CD8-positive, alpha-beta T cell (primary cell): ENCODE measurements at regions of chr6 and their contacts with region 1.

Region 1: GRCh38 chr6:49531774-49532569 is 18.5 kb upstream of the C6orf141 start:
- DNase-seq: peak in 2 of 9 experiments; percentile 20 to 43
- ATAC-seq: peak; percentile 71
- H3K4me3 ChIP-seq: no peak overlapping the region
- H3K4me3 Mint-ChIP-seq: no peak overlapping the region
- H3K27ac ChIP-seq: no peak overlapping the region
- H3K27ac Mint-ChIP-seq: no peak overlapping the region
- H3K4me1 ChIP-seq: no peaks in the 10 kb centered on the region
- H3K4me1 Mint-ChIP-seq: peaks cover 4% of the 10 kb centered on the region
- H3K27me3 ChIP-seq: no peaks in the 10 kb centered on the region
- H3K27me3 Mint-ChIP-seq: peaks cover 14% of the 10 kb centered on the region
- CTCF ChIP-seq: peak; percentile 81

Region 2: DNA sequence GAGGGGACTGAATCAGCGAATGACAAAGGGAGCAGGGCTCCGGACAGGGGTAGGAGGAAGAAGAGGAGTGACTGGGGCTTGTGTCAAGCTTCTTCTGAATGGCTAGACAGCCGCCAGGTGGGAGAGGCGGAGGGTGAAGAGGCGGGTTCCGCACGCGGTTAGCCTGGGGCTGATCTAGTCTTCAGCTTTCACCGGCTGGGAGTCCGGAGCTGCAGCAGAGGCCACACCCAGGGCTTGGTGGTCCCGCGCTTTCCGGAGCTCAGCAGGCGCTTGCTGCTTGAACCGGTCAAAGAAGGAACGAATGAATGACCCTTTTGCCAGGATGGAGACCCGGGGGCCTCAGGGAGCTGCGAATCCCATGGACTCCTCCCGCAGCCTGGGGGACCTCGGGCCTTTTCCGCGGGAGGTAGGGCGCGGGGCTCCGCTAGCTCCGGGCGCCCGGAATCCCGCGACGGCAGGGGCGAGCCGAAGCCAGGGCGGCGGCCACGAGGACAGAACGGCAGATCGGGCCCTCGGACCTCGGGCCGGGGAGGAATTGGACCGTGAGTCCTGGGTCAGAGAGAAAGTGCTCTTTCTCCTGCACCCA is 18.6 kb after region 1 on chr6 and contains the start of gene C6orf141:
- CTCF ChIA-PET with region 1: interaction called, 25 read pairs
- POLR2A ChIA-PET with region 1: no interaction called
- intact Hi-C with region 1: no loop called
- DNase-seq: peak in 1 of 9 experiments; percentile 12
- ATAC-seq: no peak
- H3K4me3 ChIP-seq: peak within 1 kb of the TSS; percentile 27 to 50
- H3K4me3 Mint-ChIP-seq: peak within 1 kb of the TSS; percentile 78
- H3K27ac ChIP-seq: no peak within 1 kb of the TSS
- H3K27ac Mint-ChIP-seq: no peak within 1 kb of the TSS
- H3K4me1 ChIP-seq: peaks cover 4% of the 10 kb centered on the region
- H3K4me1 Mint-ChIP-seq: peaks cover 18% of the 10 kb centered on the region
- H3K27me3 ChIP-seq: peaks cover 0 to 4% of the 10 kb centered on the region in 2 experiments
- H3K27me3 Mint-ChIP-seq: peaks cover 49% of the 10 kb centered on the region
- CTCF ChIP-seq: no peak
- total RNA-seq, gene C6orf141: not detected

Region 3: GRCh38 chr6:49570474-49571079 is 38.6 kb after region 1 on chr6:
- CTCF ChIA-PET with region 1: no interaction called
- POLR2A ChIA-PET with region 1: no interaction called
- intact Hi-C with region 1: no loop called
- DNase-seq: no peak
- ATAC-seq: no peak
- H3K4me3 ChIP-seq: no peak overlapping the region
- H3K4me3 Mint-ChIP-seq: no peak overlapping the region
- H3K27ac ChIP-seq: no peak overlapping the region
- H3K27ac Mint-ChIP-seq: no peak overlapping the region
- H3K4me1 ChIP-seq: no peaks in the 10 kb centered on the region
- H3K4me1 Mint-ChIP-seq: no peaks in the 10 kb centered on the region
- H3K27me3 ChIP-seq: no peaks in the 10 kb centered on the region
- H3K27me3 Mint-ChIP-seq: peaks cover 2% of the 10 kb centered on the region
- CTCF ChIP-seq: no peak

Region 4: DNA sequence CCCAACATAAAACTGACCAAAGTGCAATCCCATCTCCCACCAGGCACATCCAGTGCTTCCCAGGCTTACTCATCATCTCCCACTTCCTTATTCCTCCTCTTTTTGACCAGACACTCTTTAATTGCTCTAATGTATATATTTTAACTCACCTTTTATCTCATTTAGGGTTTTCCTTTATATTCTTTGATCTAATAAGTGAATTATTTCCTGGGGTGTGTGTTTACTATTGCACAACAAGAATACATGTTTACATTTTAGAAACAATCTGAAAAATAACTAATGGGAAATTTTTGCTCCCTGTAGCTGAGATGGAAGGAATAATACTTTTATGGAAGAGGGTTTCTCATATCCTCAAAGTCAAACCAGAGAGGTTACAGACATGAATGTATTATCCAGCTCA is 86.3 kb after region 1 on chr6:
- CTCF ChIA-PET with region 1: no interaction called
- POLR2A ChIA-PET with region 1: no interaction called
- intact Hi-C with region 1: no loop called
- DNase-seq: no peak
- ATAC-seq: no peak
- H3K4me3 ChIP-seq: no peak overlapping the region
- H3K4me3 Mint-ChIP-seq: no peak overlapping the region
- H3K27ac ChIP-seq: no peak overlapping the region
- H3K27ac Mint-ChIP-seq: no peak overlapping the region
- H3K4me1 ChIP-seq: no peaks in the 10 kb centered on the region
- H3K4me1 Mint-ChIP-seq: no peaks in the 10 kb centered on the region
- H3K27me3 ChIP-seq: no peaks in the 10 kb centered on the region
- H3K27me3 Mint-ChIP-seq: no peaks in the 10 kb centered on the region
- CTCF ChIP-seq: no peak

Region 5: GRCh38 chr6:49646130-49646824 is 114.3 kb after region 1 on chr6:
- CTCF ChIA-PET with region 1: no interaction called
- POLR2A ChIA-PET with region 1: no interaction called
- intact Hi-C with region 1: no loop called
- DNase-seq: no peak
- ATAC-seq: no peak
- H3K4me3 ChIP-seq: no peak overlapping the region
- H3K4me3 Mint-ChIP-seq: no peak overlapping the region
- H3K27ac ChIP-seq: no peak overlapping the region
- H3K27ac Mint-ChIP-seq: no peak overlapping the region
- H3K4me1 ChIP-seq: no peaks in the 10 kb centered on the region
- H3K4me1 Mint-ChIP-seq: no peaks in the 10 kb centered on the region
- H3K27me3 ChIP-seq: no peaks in the 10 kb centered on the region
- H3K27me3 Mint-ChIP-seq: no peaks in the 10 kb centered on the region
- CTCF ChIP-seq: no peak

Region 6: GRCh38 chr6:49849213-49849907 is 317.4 kb after region 1 on chr6:
- CTCF ChIA-PET with region 1: interaction called, 4 read pairs
- POLR2A ChIA-PET with region 1: no interaction called
- intact Hi-C with region 1: loop called in 1 of 2 experiments (anchors 2 kb)
- DNase-seq: peak in 2 of 9 experiments; percentile 3 to 29
- ATAC-seq: no peak
- H3K4me3 ChIP-seq: no peak overlapping the region
- H3K4me3 Mint-ChIP-seq: no peak overlapping the region
- H3K27ac ChIP-seq: no peak overlapping the region
- H3K27ac Mint-ChIP-seq: no peak overlapping the region
- H3K4me1 ChIP-seq: no peaks in the 10 kb centered on the region
- H3K4me1 Mint-ChIP-seq: no peaks in the 10 kb centered on the region
- H3K27me3 ChIP-seq: no peaks in the 10 kb centered on the region
- H3K27me3 Mint-ChIP-seq: no peaks in the 10 kb centered on the region
- CTCF ChIP-seq: peak; percentile 58

Region 7: DNA sequence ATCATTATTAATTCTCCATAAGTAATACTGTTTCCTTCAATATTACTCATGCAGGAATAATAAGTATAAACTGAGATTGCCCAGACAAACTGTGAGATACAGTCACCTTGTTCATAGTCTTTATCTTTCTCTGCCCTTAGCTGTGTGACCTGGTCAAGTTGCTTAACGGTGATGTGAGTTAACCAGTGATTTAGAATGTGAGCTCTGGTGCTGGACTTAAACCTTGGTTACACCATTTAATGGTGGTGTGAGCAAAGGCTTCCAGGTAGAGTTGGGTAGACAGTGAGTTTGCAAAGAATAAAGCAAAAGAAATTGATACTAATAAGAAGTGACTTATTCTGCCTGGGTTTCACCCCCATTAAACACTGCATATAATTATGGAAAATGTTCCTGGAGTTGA is 604.0 kb after region 1 on chr6:
- CTCF ChIA-PET with region 1: no interaction called
- POLR2A ChIA-PET with region 1: no interaction called
- intact Hi-C with region 1: no loop called
- DNase-seq: no peak
- ATAC-seq: no peak
- H3K4me3 ChIP-seq: no peak overlapping the region
- H3K4me3 Mint-ChIP-seq: no peak overlapping the region
- H3K27ac ChIP-seq: no peak overlapping the region
- H3K27ac Mint-ChIP-seq: no peak overlapping the region
- H3K4me1 ChIP-seq: no peaks in the 10 kb centered on the region
- H3K4me1 Mint-ChIP-seq: no peaks in the 10 kb centered on the region
- H3K27me3 ChIP-seq: no peaks in the 10 kb centered on the region
- H3K27me3 Mint-ChIP-seq: no peaks in the 10 kb centered on the region
- CTCF ChIP-seq: no peak